Caco-2 (cell line): ENCODE measurements at regions of chr2 and their contacts with region 1.

Region 1: GRCh38 chr2:126776692-126777619 is 121.0 kb downstream of the GYPC start:
- DNase-seq: peak; percentile 76 to 87
- H3K4me3 ChIP-seq: peak overlapping the region; percentile 44
- H3K4me3 Mint-ChIP-seq: peak overlapping the region; percentile 88
- H3K27ac Mint-ChIP-seq: peak overlapping the region; percentile 29
- H3K4me1 ChIP-seq: no peaks in the 10 kb centered on the region
- H3K4me1 Mint-ChIP-seq: peaks cover 6% of the 10 kb centered on the region
- H3K27me3 ChIP-seq: peaks cover 4% of the 10 kb centered on the region; the same call in 1 of the 2 replicates
- H3K27me3 Mint-ChIP-seq: peaks cover 28% of the 10 kb centered on the region
- CTCF ChIP-seq: peak; percentile 94 to 98

Region 2: DNA sequence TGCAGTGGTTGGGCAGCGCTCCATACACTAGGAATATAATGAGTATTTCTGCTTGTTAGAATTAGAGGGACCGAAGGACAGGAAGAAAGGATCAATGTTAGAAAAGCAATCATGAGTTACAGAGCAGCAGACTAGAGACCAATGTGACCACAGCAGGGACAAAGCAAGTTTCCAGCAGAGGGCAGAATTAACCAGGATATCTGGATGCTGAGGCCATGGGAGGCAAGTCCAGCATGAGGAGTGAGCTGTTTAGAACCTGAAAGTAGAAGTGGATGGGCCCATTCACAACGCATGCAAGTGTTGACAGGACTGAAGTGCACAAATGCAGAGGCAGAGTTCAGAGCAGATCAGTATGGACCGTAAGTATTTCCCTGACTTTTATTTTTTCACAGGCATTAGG is 1031.4 kb before region 1 on chr2:
- CTCF ChIA-PET with region 1: no interaction called
- POLR2A ChIA-PET with region 1: no interaction called
- intact Hi-C with region 1: loop called (anchors 1 kb)
- DNase-seq: peak; percentile 57 to 71
- H3K4me3 ChIP-seq: no peak overlapping the region
- H3K4me3 Mint-ChIP-seq: no peak overlapping the region
- H3K27ac Mint-ChIP-seq: no peak overlapping the region
- H3K4me1 ChIP-seq: no peaks in the 10 kb centered on the region
- H3K4me1 Mint-ChIP-seq: no peaks in the 10 kb centered on the region
- H3K27me3 ChIP-seq: no peaks in the 10 kb centered on the region
- H3K27me3 Mint-ChIP-seq: no peaks in the 10 kb centered on the region
- CTCF ChIP-seq: peak; percentile 40 to 62

Region 3: GRCh38 chr2:126359494-126359893 is 417.5 kb before region 1 on chr2:
- CTCF ChIA-PET with region 1: no interaction called
- POLR2A ChIA-PET with region 1: no interaction called
- intact Hi-C with region 1: loop called (anchors 1 kb)
- DNase-seq: peak in 1 of 2 experiments; percentile 50
- H3K4me3 ChIP-seq: no peak overlapping the region
- H3K4me3 Mint-ChIP-seq: no peak overlapping the region
- H3K27ac Mint-ChIP-seq: no peak overlapping the region
- H3K4me1 ChIP-seq: no peaks in the 10 kb centered on the region
- H3K4me1 Mint-ChIP-seq: no peaks in the 10 kb centered on the region
- H3K27me3 ChIP-seq: no peaks in the 10 kb centered on the region
- H3K27me3 Mint-ChIP-seq: peaks cover 10% of the 10 kb centered on the region
- CTCF ChIP-seq: peak; percentile 48 to 53

Region 4: GRCh38 chr2:126527836-126528507 is 249.0 kb before region 1 on chr2:
- CTCF ChIA-PET with region 1: interaction called, 23 read pairs
- POLR2A ChIA-PET with region 1: no interaction called
- intact Hi-C with region 1: loop called (anchors 1 kb)
- DNase-seq: peak; percentile 66 to 68
- H3K4me3 ChIP-seq: no peak overlapping the region
- H3K4me3 Mint-ChIP-seq: no peak overlapping the region
- H3K27ac Mint-ChIP-seq: no peak overlapping the region
- H3K4me1 ChIP-seq: no peaks in the 10 kb centered on the region
- H3K4me1 Mint-ChIP-seq: no peaks in the 10 kb centered on the region
- H3K27me3 ChIP-seq: no peaks in the 10 kb centered on the region
- H3K27me3 Mint-ChIP-seq: peaks cover 5% of the 10 kb centered on the region
- CTCF ChIP-seq: peak; percentile 58 to 76